ENCODE measurements at regions of chr14 and their contacts with region 1.

Region 1: GRCh38 chr14:24114536-24115450 is at the starts of genes DCAF11 and NRL:
- DNase-seq: peak; percentile 99
- H3K4me3 Mint-ChIP-seq: peak within 1 kb of the TSS; percentile 98
- H3K27ac Mint-ChIP-seq: peak within 1 kb of the TSS; percentile 99
- H3K4me1 Mint-ChIP-seq: peaks cover 30% of the 10 kb centered on the region
- H3K27me3 Mint-ChIP-seq: no peaks in the 10 kb centered on the region
- total RNA-seq, gene DCAF11: 67.2 and 77.3 TPM in 2 replicates
- total RNA-seq, gene NRL: 1.6 and 1.8 TPM in 2 replicates

Region 2: DNA sequence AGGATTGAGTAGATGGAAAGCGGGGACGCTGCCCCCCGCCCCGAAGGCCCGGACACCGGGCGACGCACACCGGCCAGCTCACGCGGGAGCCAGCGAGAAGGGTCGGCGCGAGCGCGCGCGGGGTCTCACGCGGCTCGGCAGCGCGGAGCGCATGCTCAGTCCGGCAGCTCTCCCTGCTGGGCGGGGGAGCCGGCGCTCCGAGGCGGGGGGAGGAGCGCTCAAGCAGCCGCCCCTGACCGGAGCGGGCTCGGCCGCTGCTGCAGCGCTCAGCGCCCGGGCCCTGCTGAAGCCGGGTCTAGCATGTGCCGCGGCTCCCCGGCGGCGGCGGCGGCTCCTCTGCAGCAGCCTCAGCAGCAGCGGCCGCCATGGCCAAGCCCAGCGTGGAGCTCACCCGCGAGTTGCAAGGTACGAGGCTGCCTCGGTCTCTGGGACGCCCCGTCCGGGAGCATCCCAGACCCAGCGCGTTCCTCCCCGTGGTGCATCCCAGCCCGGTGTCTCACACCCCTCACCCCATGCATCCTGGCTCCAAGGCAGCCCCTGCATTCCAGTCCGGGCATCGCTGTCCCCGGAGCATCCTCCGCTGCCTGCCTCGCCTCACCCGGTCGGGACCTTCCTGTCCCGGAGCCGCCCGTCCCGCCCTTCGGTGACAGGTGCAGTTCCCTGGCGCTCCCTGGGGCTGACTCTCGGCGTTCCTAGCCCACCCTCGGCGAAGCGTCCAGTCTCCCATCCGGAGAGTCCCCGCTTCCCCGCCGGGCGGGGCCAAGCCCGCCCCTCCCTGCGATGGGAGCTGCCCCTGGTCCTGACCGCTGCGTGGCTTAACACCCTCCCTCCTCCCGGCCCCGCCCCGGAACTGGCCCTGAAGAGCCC is 62.8 kb before region 1 on chr14 and contains the start of gene CARMIL3:
- intact Hi-C with region 1: loop called (anchors 1 kb)
- DNase-seq: peak; percentile 58
- H3K4me3 Mint-ChIP-seq: peak within 1 kb of the TSS; percentile 79
- H3K27ac Mint-ChIP-seq: peak within 1 kb of the TSS; percentile 61
- H3K4me1 Mint-ChIP-seq: peaks cover 17% of the 10 kb centered on the region
- H3K27me3 Mint-ChIP-seq: peaks cover 24% of the 10 kb centered on the region
- total RNA-seq, gene CARMIL3: 1.3 and 1.7 TPM in 2 replicates

Region 3: GRCh38 chr14:24093901-24094761 is 20.7 kb before region 1 on chr14 and contains the start of gene PCK2:
- intact Hi-C with region 1: loop called (anchors 1 kb)
- DNase-seq: peak; percentile 68
- H3K4me3 Mint-ChIP-seq: peak within 1 kb of the TSS; percentile 97
- H3K27ac Mint-ChIP-seq: peak within 1 kb of the TSS; percentile 98
- H3K4me1 Mint-ChIP-seq: peaks cover 31% of the 10 kb centered on the region
- H3K27me3 Mint-ChIP-seq: no peaks in the 10 kb centered on the region
- total RNA-seq, gene PCK2: 62.7 and 62.8 TPM in 2 replicates

Region 4: GRCh38 chr14:24141097-24141880 is 26.5 kb after region 1 on chr14 and contains the start of gene EMC9:
- intact Hi-C with region 1: loop called (anchors 1 kb)
- DNase-seq: peak; percentile 100
- H3K4me3 Mint-ChIP-seq: peak within 1 kb of the TSS; percentile 91
- H3K27ac Mint-ChIP-seq: peak within 1 kb of the TSS; percentile 79
- H3K4me1 Mint-ChIP-seq: peaks cover 58% of the 10 kb centered on the region
- H3K27me3 Mint-ChIP-seq: no peaks in the 10 kb centered on the region
- total RNA-seq, gene EMC9: 26.4 and 30.4 TPM in 2 replicates

Region 5: DNA sequence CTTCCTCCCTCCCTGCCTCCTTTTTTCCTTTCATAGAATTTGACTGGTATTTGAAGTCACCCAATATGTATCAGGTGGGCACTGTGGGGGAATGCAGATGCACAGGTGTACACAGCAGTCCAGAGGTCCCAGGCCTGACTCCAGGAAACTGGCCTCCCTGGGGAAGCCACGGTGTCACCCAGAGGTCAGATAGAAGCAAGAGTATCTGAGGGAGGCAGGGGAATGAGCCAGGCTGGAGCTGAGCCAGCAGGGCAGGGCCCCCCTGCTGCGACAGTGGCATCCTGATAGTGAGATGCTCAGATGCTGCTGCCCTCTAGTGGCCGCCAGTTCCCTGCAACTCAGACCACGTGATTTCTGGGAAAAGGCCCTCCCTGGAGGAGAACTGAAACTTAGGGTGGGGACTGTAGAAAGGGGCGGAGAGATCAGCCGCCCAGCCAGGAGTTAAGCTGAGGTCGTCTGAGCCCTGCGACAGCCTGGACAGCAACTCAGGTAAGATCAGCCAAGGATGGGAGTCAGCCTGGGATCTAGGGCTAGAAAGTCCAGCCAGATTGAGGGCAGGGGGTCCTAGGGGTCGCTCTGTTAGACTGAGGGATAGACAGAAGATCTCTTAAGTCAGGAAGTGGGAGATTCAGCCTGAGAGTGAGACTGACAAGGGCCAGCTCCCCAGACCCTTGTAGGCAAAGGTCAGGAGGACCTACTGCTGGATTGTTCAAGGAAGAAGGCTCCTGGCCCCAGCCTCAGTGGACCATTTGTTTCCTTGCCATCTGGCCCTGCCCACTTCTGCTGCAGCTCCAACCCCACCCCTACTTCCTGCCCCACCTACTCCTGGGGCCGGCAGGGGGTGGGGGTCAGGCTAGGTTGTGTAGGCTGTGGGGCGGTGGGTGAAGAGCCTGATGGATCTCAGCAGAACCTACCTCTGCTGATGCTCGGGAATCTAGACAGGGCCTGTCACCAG is 46.3 kb after region 1 on chr14 and contains the start of gene IRF9:
- intact Hi-C with region 1: loop called (anchors 1 kb)
- DNase-seq: peak; percentile 97
- H3K4me3 Mint-ChIP-seq: peak within 1 kb of the TSS; percentile 95
- H3K27ac Mint-ChIP-seq: peak within 1 kb of the TSS; percentile 97
- H3K4me1 Mint-ChIP-seq: peaks cover 38% of the 10 kb centered on the region
- H3K27me3 Mint-ChIP-seq: no peaks in the 10 kb centered on the region
- total RNA-seq, gene IRF9: 124 and 129 TPM in 2 replicates

Region 6: GRCh38 chr14:24215495-24216344 is 100.9 kb after region 1 on chr14 and contains the start of gene MDP1:
- intact Hi-C with region 1: loop called (anchors 1 kb)
- DNase-seq: peak; percentile 82
- H3K4me3 Mint-ChIP-seq: peak within 1 kb of the TSS; percentile 92
- H3K27ac Mint-ChIP-seq: peak within 1 kb of the TSS; percentile 98
- H3K4me1 Mint-ChIP-seq: peaks cover 22% of the 10 kb centered on the region
- H3K27me3 Mint-ChIP-seq: no peaks in the 10 kb centered on the region
- total RNA-seq, gene MDP1: 13.2 and 13.5 TPM in 2 replicates

Region 7: DNA sequence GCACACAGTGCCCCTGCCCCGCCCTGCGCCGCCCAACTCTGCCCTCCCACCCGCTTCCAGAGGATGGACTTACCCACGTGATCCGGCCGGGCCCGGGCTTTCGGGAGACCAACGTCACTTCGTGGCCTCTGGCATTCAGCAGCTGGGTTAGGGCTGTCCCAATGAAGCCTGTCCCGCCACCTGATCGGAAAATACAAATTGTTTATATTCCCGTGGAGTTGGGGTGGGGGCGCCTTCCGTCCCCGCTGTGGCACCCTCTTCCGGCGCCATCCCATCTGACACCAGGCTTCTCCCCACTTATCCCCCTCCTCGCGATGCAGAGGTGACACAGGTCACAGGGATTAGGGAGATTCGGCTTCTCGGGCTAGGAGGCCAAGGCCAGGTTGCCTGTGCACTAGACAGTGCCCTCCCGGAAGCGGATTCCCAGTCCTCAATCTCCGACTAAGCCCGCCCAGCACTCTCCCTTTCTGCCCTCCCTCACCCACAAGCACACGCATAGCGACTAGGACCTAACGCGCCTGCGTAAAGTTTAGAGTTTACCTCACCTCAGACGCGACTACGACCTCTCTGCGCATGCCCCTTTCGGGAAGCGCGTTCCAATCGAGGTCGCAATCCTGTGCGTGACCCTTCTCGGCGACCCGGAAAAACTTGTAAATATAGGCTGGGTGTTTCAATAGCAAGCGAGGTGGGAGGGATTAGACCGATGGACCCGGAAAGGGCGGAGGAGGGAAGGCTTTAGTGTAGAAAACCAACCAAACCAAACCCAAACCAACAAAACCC is 327.7 kb after region 1 on chr14 and contains the start of gene SDR39U1:
- intact Hi-C with region 1: loop called (anchors 1 kb)
- DNase-seq: peak; percentile 98
- H3K4me3 Mint-ChIP-seq: peak within 1 kb of the TSS; percentile 95
- H3K27ac Mint-ChIP-seq: peak within 1 kb of the TSS; percentile 98
- H3K4me1 Mint-ChIP-seq: peaks cover 40% of the 10 kb centered on the region
- H3K27me3 Mint-ChIP-seq: no peaks in the 10 kb centered on the region
- total RNA-seq, gene SDR39U1: 40.8 and 47.7 TPM in 2 replicates

Measured in activated T-helper 2 cell treated with anti-CD3 and anti-CD28 coated beads, Interferon-gamma antibody, Interleukin-2, Interleukin-4, amounts not matched to agents 10 μg/mL and 5 μg/mL and 100 μg/mL, durations not matched to agents 14 hours and 24 hours and 36 hours (primary cell).